ENCODE measurements at regions of chr17 and their contacts with region 1.

Region 1: DNA sequence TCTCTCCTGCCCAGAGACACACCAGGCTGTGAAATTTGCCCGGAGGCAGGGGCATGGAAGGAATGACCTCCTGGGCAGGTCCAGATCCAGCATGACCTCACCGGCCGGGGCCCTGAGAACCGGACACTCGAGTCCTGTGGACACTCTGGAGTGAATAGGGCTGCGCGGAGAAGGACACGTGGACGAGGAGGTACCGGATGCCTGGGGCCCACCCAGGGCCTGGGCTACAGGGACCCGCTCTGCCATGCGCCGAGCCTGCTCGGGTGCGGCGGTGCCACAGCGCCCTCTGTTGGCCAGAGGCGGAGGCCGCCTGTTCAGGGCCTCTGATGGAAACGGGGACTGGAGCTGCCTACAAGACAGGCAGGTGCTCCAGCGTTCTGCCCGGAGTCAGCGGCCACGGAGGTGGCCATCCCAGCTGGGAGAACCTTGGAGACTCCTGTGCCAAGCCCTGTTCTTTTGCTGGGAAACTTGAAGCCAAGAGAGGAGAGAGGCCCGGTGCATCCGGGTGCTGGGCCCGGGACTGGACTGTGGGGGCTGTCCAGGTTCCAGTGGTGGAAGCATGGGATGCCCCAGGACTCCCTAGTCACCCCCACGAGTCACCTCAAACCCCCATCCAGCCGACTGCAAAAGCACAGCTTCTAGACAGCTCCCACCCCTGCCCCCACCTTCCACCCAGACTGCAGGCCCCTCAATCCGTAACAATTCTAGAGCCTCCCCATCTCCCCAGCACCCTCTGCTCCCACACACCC is 19.3 kb upstream of the NXPH3 start:
- DNase-seq: peak; percentile 59 to 94 (median 78)
- ATAC-seq: peak; percentile 94
- H3K4me3 ChIP-seq: no peak overlapping the region
- H3K27ac ChIP-seq: no peak overlapping the region
- H3K4me1 ChIP-seq: peaks cover 3 to 8% of the 10 kb centered on the region in 2 donors
- H3K27me3 ChIP-seq: peaks cover 0 to 19% of the 10 kb centered on the region in 2 donors
- CTCF ChIP-seq: peak; percentile 98 to 99

Region 2: DNA sequence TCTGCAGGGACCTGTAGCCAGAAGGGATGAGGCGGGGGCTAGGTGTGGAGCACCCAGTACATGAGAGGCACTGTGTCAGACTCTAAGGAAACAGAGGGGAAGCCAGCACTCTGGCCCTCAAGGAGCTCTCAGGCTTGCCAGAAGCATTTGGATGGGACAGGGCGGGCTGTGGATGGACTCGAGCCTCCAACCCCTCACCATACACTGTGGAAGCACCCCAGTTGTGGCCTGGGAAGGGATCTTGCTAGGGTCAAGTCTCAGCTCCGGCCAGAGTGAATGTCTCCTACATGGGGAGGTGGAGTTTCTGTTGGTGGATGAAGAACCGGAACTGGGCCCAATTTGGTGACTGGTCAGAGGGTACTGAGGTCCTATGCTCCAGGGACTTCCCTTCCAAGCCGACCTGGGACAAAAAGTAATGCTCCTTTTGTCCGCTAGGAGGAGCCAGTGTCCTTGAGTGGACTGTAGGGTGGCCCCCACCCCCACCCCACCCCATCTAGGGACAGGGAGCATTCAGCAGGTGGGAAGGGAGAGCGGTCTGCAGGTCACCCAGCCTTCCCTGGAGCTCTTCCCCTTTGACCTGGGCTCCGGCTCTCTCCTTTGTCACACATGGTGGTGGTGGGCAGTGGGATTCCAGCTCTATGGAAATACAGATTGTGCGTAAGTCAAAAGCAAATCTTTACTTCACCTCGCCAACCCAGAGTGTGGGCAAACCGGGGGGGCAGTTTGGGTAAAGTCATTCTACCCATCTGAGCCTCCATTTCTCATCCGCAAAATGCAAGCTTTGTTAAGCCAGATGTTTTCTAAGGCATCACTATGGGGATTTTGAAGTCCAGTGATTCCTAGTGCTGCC is 121.4 kb before region 1 on chr17:
- intact Hi-C with region 1: loop called in 1 of 2 experiments (anchors 5 kb)
- DNase-seq: peak in 1 of 4 donors; percentile 40
- ATAC-seq: peak; percentile 64
- H3K4me3 ChIP-seq: no peak overlapping the region
- H3K27ac ChIP-seq: no peak overlapping the region
- H3K4me1 ChIP-seq: no peaks in the 10 kb centered on the region
- H3K27me3 ChIP-seq: peaks cover 0 to 40% of the 10 kb centered on the region in 2 donors
- CTCF ChIP-seq: peak; percentile 58 to 67

Region 3: GRCh38 chr17:49496183-49496866 is 60.1 kb before region 1 on chr17:
- intact Hi-C with region 1: loop called in 1 of 2 experiments (anchors 5 kb)
- DNase-seq: peak in 3 of 4 donors; percentile 71 to 92 (median 72)
- ATAC-seq: peak; percentile 91
- H3K4me3 ChIP-seq: peak overlapping the region; percentile 16 to 39
- H3K27ac ChIP-seq: no peak overlapping the region
- H3K4me1 ChIP-seq: peaks cover 18 to 32% of the 10 kb centered on the region in 2 donors
- H3K27me3 ChIP-seq: peaks cover 42 to 83% of the 10 kb centered on the region in 2 donors
- CTCF ChIP-seq: peak; percentile 88 to 89